Dorsolateral prefrontal cortex (tissue), 120 donors: ENCODE measurements at regions of chr1 and their contacts with region 1.

Region 1: DNA sequence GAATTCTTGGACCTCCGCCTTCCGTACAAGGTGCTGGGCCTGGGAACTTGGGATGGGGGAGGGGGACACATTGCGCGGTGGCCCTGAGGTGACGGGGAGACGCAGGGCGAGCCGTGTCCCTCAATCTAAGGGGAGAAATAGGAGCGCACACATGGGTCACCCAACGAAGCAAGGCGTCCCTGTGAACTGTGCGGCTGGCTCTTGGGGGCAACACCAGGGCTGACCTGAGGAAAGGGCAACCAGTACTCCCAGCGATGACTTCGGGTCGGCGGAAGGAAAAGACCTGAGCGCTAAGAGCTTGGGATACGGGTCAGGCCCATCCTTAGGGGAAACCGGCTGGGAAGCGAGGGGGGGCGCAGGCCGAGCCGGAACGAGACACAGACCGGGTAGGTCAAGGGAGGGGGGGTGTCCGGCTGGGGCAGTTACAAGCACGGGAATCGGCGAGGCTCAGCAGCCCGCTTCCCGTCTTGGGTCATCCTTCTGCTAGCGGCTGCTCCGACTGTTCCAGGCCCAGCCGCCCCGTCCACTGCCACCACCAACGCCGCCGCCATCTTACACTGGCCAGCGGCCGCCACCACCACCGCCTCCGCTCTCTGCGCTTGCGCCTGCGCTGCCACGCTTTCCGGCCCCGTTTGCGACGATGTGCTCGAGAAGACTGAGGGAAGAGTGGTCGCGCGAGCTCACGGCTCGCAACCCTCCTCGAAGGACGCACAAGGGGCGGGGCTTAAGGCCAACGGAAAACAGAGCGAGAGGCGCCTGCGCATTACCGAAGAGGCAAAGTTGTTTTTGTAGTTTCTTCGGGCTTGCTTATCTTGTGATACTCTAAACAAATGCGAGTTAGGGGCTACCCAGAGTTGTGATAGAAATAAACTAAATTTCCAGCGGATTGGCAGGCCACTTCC is at the start of gene DCAF8:
- DNase-seq: peak; percentile 93 to 98 (median 97)
- H3K4me3 ChIP-seq: peak within 1 kb of the TSS; percentile 47 to 97 (median 89)
- H3K27ac ChIP-seq: peak within 1 kb of the TSS; percentile 88 to 100 (median 98)
- H3K27me3 ChIP-seq: no peaks in the 10 kb centered on the region
- CTCF ChIP-seq: peak in 40 of 56 donors; percentile 4 to 55 (median 28)
- total RNA-seq, gene DCAF8: 111 to 260 (median 188) TPM

Region 2: GRCh38 chr1:160085686-160086455 is 176.3 kb before region 1 on chr1:
- intact Hi-C with region 1: loop called in 1 of 2 experiments (anchors 5 kb)
- DNase-seq: peak; percentile 92 to 96 (median 95)
- H3K4me3 ChIP-seq: peak overlapping the region in 52 of 59 donors; percentile 6 to 79 (median 34)
- H3K27ac ChIP-seq: peak overlapping the region; percentile 75 to 100 (median 97)
- H3K27me3 ChIP-seq: no peaks in the 10 kb centered on the region
- CTCF ChIP-seq: peak; percentile 67 to 98 (median 94)

Region 3: DNA sequence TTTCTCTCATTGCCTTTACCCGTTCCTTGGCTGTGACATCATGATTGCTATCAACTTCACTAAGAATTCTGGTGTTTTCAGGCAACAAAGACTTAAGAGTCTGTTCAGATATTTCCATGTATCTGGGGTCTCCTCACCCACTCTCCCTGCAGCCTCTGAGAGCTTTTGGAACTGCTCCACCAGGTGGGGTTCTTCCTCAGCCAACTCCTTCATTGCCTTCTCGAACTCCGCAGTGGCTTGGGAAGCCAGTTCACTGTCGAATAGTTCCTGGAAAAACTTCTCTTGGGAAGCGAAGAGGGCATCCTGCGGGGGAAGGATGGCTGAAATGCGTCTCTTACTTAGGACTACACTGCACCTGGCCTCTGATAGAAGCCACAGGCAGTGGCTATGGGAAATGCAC is 20.7 kb after region 1 on chr1:
- intact Hi-C with region 1: loop called in 1 of 2 experiments (anchors 2 kb)
- DNase-seq: no peak
- H3K4me3 ChIP-seq: peak overlapping the region in 2 of 59 donors; percentile 95 to 98
- H3K27ac ChIP-seq: no peak overlapping the region
- H3K27me3 ChIP-seq: no peaks in the 10 kb centered on the region
- CTCF ChIP-seq: no peak